ENCODE measurements at regions of chr22 and their contacts with region 1.

Region 1: GRCh38 chr22:50469377-50470305 is 5.2 kb downstream of the SBF1 start:
- DNase-seq: no peak

Region 2: GRCh38 chr22:50498322-50498890 is 28.8 kb after region 1 on chr22:
- CTCF ChIA-PET with region 1: interaction called, 12 read pairs
- POLR2A ChIA-PET with region 1: interaction called, 4 read pairs
- DNase-seq: peak; percentile 77

Region 3: DNA sequence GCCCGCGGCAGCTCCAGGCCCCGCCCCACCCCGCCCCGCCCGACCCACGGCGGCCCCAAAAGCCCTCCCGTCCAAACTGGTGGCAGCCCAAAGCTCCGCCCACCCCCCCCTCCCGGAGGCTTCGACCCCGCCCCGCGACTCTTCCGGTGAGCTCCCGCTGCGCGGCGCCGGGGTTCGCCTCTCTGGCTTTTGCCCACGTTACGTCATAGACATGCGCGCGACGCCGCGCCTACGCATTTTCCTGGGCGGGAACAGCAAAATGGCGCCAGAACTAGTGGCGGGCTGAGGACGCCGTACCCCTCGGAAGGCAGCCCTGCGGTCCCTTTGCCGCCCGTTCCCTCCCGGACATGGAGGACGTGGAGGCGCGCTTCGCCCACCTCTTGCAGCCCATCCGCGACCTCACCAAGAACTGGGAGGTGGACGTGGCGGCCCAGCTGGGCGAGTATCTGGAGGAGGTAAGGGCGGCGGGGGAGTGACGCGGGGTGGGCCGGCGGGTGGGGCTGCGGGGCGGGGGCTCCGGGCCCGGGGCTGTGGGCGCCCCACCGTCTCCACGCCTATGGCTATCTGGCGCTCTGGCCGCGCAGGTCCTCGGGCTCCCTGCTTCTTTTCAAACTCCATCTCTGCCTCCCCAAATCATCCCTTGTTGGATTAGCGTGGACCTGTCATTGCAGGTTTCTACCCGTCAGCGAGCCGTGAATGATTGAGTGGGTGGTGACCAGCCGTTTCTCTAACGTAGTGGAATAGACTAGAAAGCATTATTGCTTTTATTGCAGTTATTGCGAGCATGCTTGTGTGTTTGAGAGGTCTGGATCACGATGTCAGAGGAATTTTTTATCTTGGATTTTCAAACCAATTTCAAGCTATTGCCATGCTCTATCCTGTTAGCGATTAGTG is 38.6 kb after region 1 on chr22 and contains the start of gene NCAPH2:
- CTCF ChIA-PET with region 1: interaction called, 4 read pairs
- POLR2A ChIA-PET with region 1: interaction called, 12 read pairs
- DNase-seq: peak; percentile 100